Activated CD8-positive, alpha-beta T cell treated with anti-CD3 and anti-CD28 coated beads for 36 hours (primary cell): ENCODE measurements at regions of chr1 and their contacts with region 1.

Region 1: GRCh38 chr1:186482661-186483255 is 21.8 kb upstream of the PDC start:
- DNase-seq: peak; percentile 78
- ATAC-seq: peak; percentile 75
- H3K4me3 Mint-ChIP-seq: no peak overlapping the region
- H3K27ac Mint-ChIP-seq: no peak overlapping the region
- H3K4me1 Mint-ChIP-seq: no peaks in the 10 kb centered on the region
- H3K27me3 Mint-ChIP-seq: no peaks in the 10 kb centered on the region
- CTCF ChIP-seq: peak; percentile 97

Region 2: DNA sequence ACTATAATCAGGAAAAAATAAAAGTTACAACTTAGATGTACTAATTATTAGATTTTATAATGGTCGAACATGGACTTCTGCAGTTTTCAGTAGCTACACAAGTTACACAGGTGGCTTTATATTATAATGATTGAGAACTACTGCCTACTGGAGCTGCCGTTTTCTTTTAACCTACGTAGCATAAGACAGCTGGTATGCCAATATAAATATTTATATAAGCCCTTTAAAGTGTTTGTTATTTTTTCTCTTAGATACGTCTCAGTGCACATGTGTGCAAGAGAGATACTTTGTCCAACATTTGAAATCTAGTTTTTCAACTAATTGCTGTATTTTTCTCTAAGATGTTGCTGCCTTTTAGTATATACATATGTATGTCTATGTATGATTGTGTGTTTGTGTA is 64.3 kb before region 1 on chr1:
- CTCF ChIA-PET with region 1: no interaction called
- POLR2A ChIA-PET with region 1: no interaction called
- intact Hi-C with region 1: no loop called
- DNase-seq: no peak
- ATAC-seq: no peak
- H3K4me3 Mint-ChIP-seq: no peak overlapping the region
- H3K27ac Mint-ChIP-seq: no peak overlapping the region
- H3K4me1 Mint-ChIP-seq: peaks cover 10% of the 10 kb centered on the region
- H3K27me3 Mint-ChIP-seq: no peaks in the 10 kb centered on the region
- CTCF ChIP-seq: no peak

Region 3: DNA sequence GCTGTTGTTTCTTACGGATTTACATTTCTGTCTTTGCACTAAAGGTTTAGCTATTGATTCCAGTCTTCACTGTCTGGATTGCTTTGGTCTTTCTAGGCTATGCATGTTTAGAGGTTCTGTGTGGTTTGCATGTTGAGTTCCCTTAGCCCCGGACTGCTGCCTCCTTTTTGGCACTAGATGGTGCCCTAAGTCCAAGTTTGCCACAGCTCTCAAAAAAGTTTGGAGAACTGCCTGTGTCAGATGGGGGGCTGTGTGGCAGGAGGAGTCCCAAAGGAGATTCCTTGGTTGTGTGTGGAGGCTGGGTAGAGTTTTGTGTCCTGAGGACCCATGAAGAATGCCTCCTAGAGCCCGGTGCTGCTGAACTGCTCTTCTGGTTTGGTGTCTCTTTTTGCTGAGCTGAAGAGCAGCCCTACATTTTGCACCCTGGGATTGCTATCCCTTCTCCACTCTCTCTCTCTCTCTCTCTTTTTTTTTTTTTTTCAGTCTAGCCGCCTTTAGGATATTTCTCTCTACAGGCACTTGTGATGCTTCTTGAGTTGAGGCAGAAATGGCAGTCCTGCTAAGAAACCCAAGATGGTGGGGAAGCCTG is 123.1 kb after region 1 on chr1:
- CTCF ChIA-PET with region 1: no interaction called
- POLR2A ChIA-PET with region 1: no interaction called
- intact Hi-C with region 1: loop called (anchors 10 kb)
- DNase-seq: peak; percentile 46
- ATAC-seq: no peak
- H3K4me3 Mint-ChIP-seq: no peak overlapping the region
- H3K27ac Mint-ChIP-seq: no peak overlapping the region
- H3K4me1 Mint-ChIP-seq: no peaks in the 10 kb centered on the region
- H3K27me3 Mint-ChIP-seq: peaks cover 23% of the 10 kb centered on the region
- CTCF ChIP-seq: peak; percentile 46

Region 4: DNA sequence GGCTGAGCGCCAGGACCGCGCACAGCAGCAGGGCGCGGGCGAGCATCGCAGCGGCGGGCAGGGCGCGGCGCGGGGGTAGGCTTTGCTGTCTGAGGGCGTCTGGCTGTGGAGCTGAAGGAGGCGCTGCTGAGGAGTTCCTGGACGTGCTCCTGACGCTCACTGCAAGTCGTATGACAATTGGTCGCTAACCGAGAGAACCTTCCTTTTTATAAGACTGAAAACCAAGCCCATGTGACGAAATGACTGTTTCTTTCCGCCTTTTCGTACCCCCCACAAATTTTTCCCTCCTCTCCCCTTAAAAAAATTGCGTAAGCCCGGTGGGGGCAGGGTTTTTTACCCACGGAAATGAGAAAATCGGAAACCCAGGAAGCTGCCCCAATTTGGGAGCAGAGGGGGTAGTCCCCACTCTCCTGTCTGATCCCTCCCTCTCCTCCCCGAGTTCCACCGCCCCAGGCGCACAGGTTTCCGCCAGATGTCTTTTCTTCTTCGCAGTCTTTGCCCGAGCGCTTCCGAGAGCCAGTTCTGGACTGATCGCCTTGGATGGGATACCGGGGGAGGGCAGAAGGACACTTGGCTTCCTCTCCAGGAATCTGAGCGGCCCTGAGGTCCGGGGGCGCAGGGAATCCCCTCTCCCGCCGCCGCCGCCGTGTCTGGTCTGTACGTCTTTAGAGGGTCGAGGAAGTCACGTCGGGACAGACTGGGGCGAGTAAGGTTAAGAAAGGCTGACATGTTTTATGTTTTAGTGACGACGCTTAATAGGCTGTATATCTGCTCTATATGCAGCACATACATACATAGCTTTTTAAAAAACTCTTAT is 197.7 kb after region 1 on chr1 and contains the start of gene PTGS2:
- CTCF ChIA-PET with region 1: interaction called, 4 read pairs
- POLR2A ChIA-PET with region 1: no interaction called
- intact Hi-C with region 1: loop called (anchors 5 kb)
- DNase-seq: peak; percentile 65
- ATAC-seq: peak; percentile 97
- H3K4me3 Mint-ChIP-seq: peak within 1 kb of the TSS; percentile 75
- H3K27ac Mint-ChIP-seq: peak within 1 kb of the TSS; percentile 30
- H3K4me1 Mint-ChIP-seq: peaks cover 15% of the 10 kb centered on the region
- H3K27me3 Mint-ChIP-seq: peaks cover 55% of the 10 kb centered on the region
- CTCF ChIP-seq: no peak
- total RNA-seq, gene PTGS2: 0.09 TPM in 1 of 2 experiments, not detected in the other